Heart right ventricle (tissue), 16 donors: ENCODE measurements at regions of chr1 and their contacts with region 1.

Region 1: GRCh38 chr1:156740679-156741612 is at the start of gene MRPL24:
- DNase-seq: peak; percentile 96 to 99
- ATAC-seq: peak; percentile 89 to 97 (median 94)
- H3K4me3 ChIP-seq: peak within 1 kb of the TSS; percentile 33 to 87 (median 74)
- H3K27ac ChIP-seq: peak within 1 kb of the TSS; percentile 59 to 96 (median 88)
- H3K4me1 ChIP-seq: peaks cover 5 to 51% (median 29%) of the 10 kb centered on the region in 9 donors
- H3K27me3 ChIP-seq: no peaks in the 10 kb centered on the region
- CTCF ChIP-seq: no peak
- total RNA-seq, gene MRPL24: 70.3 to 105 (median 86.7) TPM

Region 2: DNA sequence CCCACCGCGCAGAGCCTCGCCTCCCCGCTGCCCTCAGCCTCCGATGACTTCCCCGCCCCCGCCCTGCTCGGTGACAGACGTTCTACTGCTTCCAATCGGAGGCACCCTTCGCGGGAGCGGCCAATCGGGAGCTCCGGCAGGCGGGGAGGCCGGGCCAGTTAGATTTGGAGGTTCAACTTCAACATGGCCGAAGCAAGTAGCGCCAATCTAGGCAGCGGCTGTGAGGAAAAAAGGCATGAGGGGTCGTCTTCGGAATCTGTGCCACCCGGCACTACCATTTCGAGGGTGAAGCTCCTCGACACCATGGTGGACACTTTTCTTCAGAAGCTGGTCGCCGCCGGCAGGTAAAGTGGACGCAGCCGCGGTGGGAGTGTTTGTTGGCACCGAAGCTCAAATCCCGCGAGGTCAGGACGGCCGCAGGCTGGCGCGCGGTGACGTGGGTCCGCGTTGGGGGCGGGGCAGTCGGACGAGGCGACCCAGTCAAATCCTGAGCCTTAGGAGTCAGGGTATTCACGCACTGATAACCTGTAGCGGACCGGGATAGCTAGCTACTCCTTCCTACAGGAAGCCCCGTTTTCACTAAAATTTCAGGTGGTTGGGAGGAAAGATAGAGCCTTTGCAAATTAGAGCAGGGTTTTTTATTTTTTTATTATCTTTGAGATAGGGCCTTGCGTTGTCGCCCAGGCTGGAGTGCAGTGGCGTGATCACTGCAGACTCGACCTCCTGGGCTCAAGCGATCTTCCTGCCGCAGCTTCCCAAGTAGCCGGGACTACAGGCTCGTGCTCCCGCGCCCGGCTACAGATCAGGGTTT is 527.9 kb before region 1 on chr1 and contains the start of gene PMF1:
- intact Hi-C with region 1: no loop called
- DNase-seq: peak; percentile 96 to 98
- ATAC-seq: peak; percentile 97 to 99 (median 99)
- H3K4me3 ChIP-seq: peak within 1 kb of the TSS; percentile 51 to 84 (median 66)
- H3K27ac ChIP-seq: peak within 1 kb of the TSS; percentile 85 to 99 (median 96)
- H3K4me1 ChIP-seq: peaks cover 3 to 44% (median 27%) of the 10 kb centered on the region in 9 donors
- H3K27me3 ChIP-seq: no peaks in the 10 kb centered on the region
- CTCF ChIP-seq: no peak
- total RNA-seq, gene PMF1: 55.9 to 87.3 (median 66.4) TPM

Region 3: GRCh38 chr1:156773607-156774006 is 32.7 kb after region 1 on chr1:
- intact Hi-C with region 1: loop called in 2 of 10 experiments (anchors 2 to 5 kb)
- DNase-seq: no peak
- ATAC-seq: no peak
- H3K4me3 ChIP-seq: peak overlapping the region in 1 of 10 donors; percentile 6
- H3K27ac ChIP-seq: peak overlapping the region in 8 of 10 donors; percentile 12 to 73 (median 46)
- H3K4me1 ChIP-seq: peaks cover 23 to 91% (median 70%) of the 10 kb centered on the region in 9 donors
- H3K27me3 ChIP-seq: no peaks in the 10 kb centered on the region
- CTCF ChIP-seq: peak in 1 of 9 donors; percentile 6